Esophagus muscularis mucosa (tissue), 4 donors: ENCODE measurements at regions of chrX and their contacts with region 1.

Region 1: GRCh38 chrX:114959729-114960128 is 57.7 kb downstream of the IL13RA2 start:
- DNase-seq: no peak
- H3K4me3 ChIP-seq: no peak overlapping the region
- H3K27ac ChIP-seq: no peak overlapping the region
- H3K4me1 ChIP-seq: no peaks in the 10 kb centered on the region
- H3K27me3 ChIP-seq: no peaks in the 10 kb centered on the region
- CTCF ChIP-seq: peak; percentile 39 to 49 (median 41)
- EP300 ChIP-seq: no peak
- POLR2A ChIP-seq: no peak

Region 2: DNA sequence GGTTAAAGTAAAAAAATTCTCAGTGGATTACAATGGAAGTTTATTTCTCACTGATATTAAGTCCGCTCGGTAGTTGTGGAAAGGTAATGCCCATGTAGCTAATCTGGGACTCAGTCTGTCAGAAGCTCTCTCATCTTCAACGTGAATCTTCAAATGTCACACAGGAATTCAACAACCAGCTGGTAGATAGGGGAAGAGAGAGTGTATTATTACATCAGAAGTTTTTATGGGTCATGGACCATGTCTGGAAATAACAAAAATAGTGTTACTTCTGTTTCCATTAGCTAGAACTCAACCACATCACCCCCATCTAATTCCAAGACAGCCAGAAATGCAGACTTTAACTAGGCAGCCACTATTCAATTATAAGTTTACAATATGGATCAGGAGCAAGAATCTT is 882.0 kb before region 1 on chrX:
- intact Hi-C with region 1: no loop called
- DNase-seq: no peak
- H3K4me3 ChIP-seq: no peak overlapping the region
- H3K27ac ChIP-seq: no peak overlapping the region
- H3K4me1 ChIP-seq: no peaks in the 10 kb centered on the region
- H3K27me3 ChIP-seq: no peaks in the 10 kb centered on the region
- CTCF ChIP-seq: no peak
- EP300 ChIP-seq: no peak
- POLR2A ChIP-seq: no peak

Region 3: DNA sequence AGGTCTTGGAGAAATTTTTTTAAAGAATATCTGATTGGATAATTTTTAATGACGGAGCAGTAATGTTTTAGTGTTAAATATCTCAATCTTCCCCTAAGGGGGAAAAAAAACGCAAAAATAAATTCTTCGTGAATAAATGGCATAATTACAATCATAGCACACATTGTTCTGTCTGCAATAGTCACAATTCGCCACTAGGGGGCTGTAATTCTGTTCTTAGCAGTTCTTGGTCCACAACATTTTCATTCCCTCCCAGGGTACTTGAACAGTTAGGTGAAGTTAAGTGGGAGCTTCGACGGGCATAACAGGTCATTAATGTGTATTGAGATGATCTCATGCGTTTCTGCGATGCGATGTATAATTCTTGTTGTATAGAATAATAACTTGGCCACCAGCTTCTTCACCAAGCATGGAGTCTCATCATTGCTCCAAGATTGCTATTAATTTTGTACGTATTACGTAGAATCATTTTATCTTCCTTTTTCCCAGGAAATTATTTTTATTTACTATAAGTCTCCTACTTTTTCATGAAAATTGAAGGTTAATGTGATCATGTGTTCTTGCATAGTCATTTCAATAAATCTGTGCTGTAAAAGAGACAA is 348.6 kb before region 1 on chrX:
- intact Hi-C with region 1: loop called (anchors 5 kb)
- DNase-seq: no peak
- H3K4me3 ChIP-seq: no peak overlapping the region
- H3K27ac ChIP-seq: no peak overlapping the region
- H3K4me1 ChIP-seq: no peaks in the 10 kb centered on the region
- H3K27me3 ChIP-seq: no peaks in the 10 kb centered on the region
- CTCF ChIP-seq: peak; percentile 64 to 83 (median 76)
- EP300 ChIP-seq: no peak
- POLR2A ChIP-seq: no peak

Region 4: GRCh38 chrX:114626323-114626722 is 333.4 kb before region 1 on chrX:
- intact Hi-C with region 1: loop called (anchors 5 kb)
- DNase-seq: no peak
- H3K4me3 ChIP-seq: no peak overlapping the region
- H3K27ac ChIP-seq: no peak overlapping the region
- H3K4me1 ChIP-seq: no peaks in the 10 kb centered on the region
- H3K27me3 ChIP-seq: no peaks in the 10 kb centered on the region
- CTCF ChIP-seq: peak; percentile 17 to 31 (median 24)
- EP300 ChIP-seq: no peak
- POLR2A ChIP-seq: no peak

Region 5: DNA sequence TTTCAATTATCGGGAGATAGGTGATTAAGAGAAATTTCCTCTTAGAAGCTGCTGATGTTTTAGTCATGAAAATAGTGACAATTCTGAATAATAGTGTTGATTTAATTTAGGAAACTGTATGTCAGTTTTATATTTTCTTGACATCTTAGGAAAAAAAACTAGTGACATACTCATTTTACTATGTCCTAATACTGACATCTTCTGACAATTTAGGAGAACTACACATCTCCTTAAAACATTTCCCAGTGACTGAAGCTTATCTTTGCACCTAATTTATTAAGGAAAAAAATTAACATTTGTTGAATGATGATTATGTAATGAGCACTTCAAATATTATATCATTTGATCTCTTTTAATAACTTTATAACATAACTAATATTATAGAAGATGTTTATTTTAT is 187.5 kb after region 1 on chrX:
- intact Hi-C with region 1: loop called (anchors 5 kb)
- DNase-seq: no peak
- H3K4me3 ChIP-seq: no peak overlapping the region
- H3K27ac ChIP-seq: no peak overlapping the region
- H3K4me1 ChIP-seq: peaks cover 0 to 5% (median 0%) of the 10 kb centered on the region in 4 donors
- H3K27me3 ChIP-seq: no peaks in the 10 kb centered on the region
- CTCF ChIP-seq: peak; percentile 37 to 55 (median 49)
- EP300 ChIP-seq: no peak
- POLR2A ChIP-seq: no peak

Region 6: GRCh38 chrX:115192244-115192700 is 232.5 kb after region 1 on chrX:
- intact Hi-C with region 1: no loop called
- DNase-seq: no peak
- H3K4me3 ChIP-seq: no peak overlapping the region
- H3K27ac ChIP-seq: no peak overlapping the region
- H3K4me1 ChIP-seq: no peaks in the 10 kb centered on the region
- H3K27me3 ChIP-seq: no peaks in the 10 kb centered on the region
- CTCF ChIP-seq: no peak
- EP300 ChIP-seq: no peak
- POLR2A ChIP-seq: no peak